Pancreas (tissue), 10 donors: ENCODE measurements at regions of chr9 and their contacts with region 1.

Region 1: GRCh38 chr9:116656501-116656971 is 30.6 kb upstream of the TRIM32 start:
- DNase-seq: no peak
- ATAC-seq: no peak
- H3K4me3 ChIP-seq: no peak overlapping the region
- H3K27ac ChIP-seq: no peak overlapping the region
- H3K4me1 ChIP-seq: peaks cover 0 to 5% (median 0%) of the 10 kb centered on the region in 3 donors
- H3K27me3 ChIP-seq: no peaks in the 10 kb centered on the region
- CTCF ChIP-seq: no peak

Region 2: GRCh38 chr9:115587310-115587709 is 1069.2 kb before region 1 on chr9:
- intact Hi-C with region 1: loop called in 1 of 3 experiments (anchors 10 kb)
- DNase-seq: no peak
- ATAC-seq: no peak
- H3K4me3 ChIP-seq: no peak overlapping the region
- H3K27ac ChIP-seq: no peak overlapping the region
- H3K4me1 ChIP-seq: no peaks in the 10 kb centered on the region
- H3K27me3 ChIP-seq: no peaks in the 10 kb centered on the region
- CTCF ChIP-seq: no peak